ENCODE measurements at regions of chr14 and their contacts with region 1.

Region 1: DNA sequence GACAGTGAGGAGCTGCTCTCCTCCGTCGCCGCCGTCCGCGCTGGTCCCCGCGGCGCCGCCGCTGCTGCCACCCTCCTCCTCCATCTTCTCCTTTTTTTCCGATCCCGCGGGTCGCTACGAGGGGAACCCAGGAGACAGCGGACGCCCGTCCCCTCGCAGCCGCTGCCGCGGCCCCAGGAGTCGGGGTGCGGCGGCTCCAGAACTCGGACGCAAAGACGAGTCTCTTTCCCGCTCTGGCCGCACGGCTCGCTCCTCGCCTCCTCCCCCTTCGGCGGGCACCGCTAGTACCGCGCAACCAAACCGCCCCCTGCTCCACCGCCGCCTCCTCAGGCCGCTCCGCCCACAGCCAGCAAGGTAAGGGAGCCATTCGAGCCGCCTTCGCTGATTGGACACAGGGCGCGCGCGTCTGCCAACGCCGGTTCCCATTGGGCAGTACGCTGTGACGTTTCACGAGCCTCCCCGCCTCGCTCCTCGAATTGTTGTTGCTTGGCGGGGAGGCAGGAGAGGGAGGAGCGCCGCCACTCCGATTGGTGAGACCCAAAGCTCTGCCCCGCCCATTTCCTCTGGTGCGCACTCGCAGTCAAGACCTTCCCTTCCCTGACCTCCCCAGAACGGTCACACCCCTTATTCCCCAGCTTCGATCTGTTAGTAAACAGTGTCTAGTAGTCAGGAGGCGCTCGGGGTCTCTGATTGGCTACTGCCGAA is at the start of gene RPS6KA5:
- DNase-seq: peak; percentile 100
- H3K4me3 Mint-ChIP-seq: peak within 1 kb of the TSS; percentile 84
- H3K27ac Mint-ChIP-seq: peak within 1 kb of the TSS; percentile 40
- H3K4me1 Mint-ChIP-seq: peaks cover 62% of the 10 kb centered on the region
- H3K27me3 Mint-ChIP-seq: no peaks in the 10 kb centered on the region
- total RNA-seq, gene RPS6KA5: 16.6 and 16.7 TPM in 2 replicates

Region 2: DNA sequence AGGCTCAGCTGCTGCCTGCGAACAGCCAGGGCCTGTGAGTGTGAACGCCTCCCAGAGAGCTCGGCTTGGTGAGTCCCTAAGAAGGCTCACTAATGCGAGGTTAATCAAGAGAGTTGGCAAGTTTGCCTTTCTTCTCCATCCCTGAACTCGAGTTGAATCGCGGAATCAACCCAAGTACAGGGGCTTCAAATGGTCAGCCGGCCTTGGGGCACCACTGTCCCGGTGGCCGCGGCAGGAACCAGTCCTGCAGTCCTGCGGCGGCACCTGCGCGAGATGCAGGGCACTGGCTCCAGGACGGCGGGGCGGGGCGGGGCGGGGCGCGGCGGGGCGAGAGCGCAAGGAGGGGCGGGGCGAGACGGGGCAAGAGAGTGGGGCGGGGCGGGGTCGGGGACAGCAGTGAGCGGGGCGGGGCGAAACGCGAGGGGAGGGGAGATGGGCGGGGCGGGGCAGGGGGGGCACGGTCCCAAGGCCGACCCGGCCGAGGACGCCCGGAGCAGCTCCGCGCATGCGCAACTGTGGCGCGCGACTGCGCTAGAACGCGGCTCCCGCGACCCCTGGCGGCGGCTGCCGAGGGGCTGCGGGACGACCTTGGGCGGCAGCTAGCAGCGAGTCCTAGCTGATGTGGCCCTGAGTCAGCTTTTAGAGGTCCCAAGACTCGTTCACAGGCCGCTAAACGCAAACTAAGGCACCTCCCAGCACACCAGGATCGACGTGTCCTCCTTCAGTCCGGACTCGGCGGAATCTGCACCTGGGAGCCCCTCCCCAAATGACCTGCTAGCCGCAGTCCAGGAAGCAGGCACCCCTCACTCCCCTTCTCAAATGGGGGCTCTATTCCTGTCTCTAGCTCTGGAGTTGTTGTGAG is 302.2 kb before region 1 on chr14:
- intact Hi-C with region 1: loop called (anchors 1 kb)
- DNase-seq: peak; percentile 93
- H3K4me3 Mint-ChIP-seq: peak overlapping the region; percentile 74
- H3K27ac Mint-ChIP-seq: peak overlapping the region; percentile 78
- H3K4me1 Mint-ChIP-seq: peaks cover 6% of the 10 kb centered on the region
- H3K27me3 Mint-ChIP-seq: peaks cover 27% of the 10 kb centered on the region

Region 3: DNA sequence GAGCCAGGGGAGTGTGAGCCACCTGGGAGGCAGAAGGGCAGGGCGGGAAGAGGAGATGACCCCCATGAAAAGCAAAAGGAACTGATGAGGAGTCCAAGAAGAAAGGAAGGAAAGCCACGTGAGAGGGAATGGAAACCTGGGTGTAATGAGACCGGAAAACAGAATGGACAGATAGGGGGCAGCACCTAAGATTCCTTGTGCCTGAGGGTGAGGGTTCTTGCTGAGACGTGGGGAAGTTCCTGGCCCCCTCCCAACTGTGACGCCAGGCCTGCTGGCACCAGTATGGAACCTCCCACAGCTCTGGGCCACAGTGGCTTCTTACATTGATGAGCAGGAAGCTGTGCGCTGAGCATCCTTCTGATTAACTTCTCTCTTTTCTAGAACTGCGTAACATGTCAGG is 275.0 kb before region 1 on chr14:
- intact Hi-C with region 1: no loop called
- DNase-seq: no peak
- H3K4me3 Mint-ChIP-seq: no peak overlapping the region
- H3K27ac Mint-ChIP-seq: no peak overlapping the region
- H3K4me1 Mint-ChIP-seq: no peaks in the 10 kb centered on the region
- H3K27me3 Mint-ChIP-seq: no peaks in the 10 kb centered on the region

Region 4: GRCh38 chr14:91021991-91022621 is 38.4 kb before region 1 on chr14:
- intact Hi-C with region 1: loop called (anchors 1 kb)
- DNase-seq: no peak
- H3K4me3 Mint-ChIP-seq: peak overlapping the region; percentile 76
- H3K27ac Mint-ChIP-seq: peak overlapping the region; percentile 94
- H3K4me1 Mint-ChIP-seq: peaks cover 83% of the 10 kb centered on the region
- H3K27me3 Mint-ChIP-seq: no peaks in the 10 kb centered on the region

Region 5: DNA sequence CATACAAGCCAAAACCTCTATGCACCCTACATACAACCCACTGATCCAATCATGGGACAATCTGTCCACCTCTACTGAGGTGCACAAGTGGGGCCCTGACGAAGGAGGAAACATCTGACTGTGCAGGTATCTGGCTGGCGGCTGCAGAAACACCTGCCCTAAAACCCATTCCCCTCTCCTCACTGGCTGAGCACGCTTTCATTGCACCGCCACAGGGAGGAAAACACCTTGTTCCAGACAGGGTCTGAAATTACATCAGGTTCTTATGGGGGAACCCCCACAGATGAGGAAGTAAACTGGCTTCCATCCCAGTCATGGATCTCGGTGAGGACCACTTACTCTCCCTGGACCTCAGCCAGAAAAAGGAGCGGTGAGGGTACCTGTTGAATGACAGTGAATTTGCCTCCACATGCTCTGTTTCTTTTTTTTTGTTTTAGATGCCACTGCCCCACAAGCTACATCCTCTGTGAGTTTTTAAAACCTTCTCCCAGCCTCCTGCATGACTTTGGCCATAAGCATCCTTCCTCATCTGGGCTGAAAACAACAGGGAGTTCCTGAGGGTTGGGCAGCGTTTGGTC is 29.5 kb after region 1 on chr14:
- intact Hi-C with region 1: no loop called
- DNase-seq: no peak
- H3K4me3 Mint-ChIP-seq: no peak overlapping the region
- H3K27ac Mint-ChIP-seq: no peak overlapping the region
- H3K4me1 Mint-ChIP-seq: peaks cover 13% of the 10 kb centered on the region
- H3K27me3 Mint-ChIP-seq: peaks cover 2% of the 10 kb centered on the region

Region 6: GRCh38 chr14:91114079-91115065 is 53.9 kb after region 1 on chr14:
- intact Hi-C with region 1: loop called (anchors 1 kb)
- DNase-seq: peak; percentile 74
- H3K4me3 Mint-ChIP-seq: peak overlapping the region; percentile 95
- H3K27ac Mint-ChIP-seq: peak overlapping the region; percentile 94
- H3K4me1 Mint-ChIP-seq: peaks cover 81% of the 10 kb centered on the region
- H3K27me3 Mint-ChIP-seq: no peaks in the 10 kb centered on the region

Region 7: DNA sequence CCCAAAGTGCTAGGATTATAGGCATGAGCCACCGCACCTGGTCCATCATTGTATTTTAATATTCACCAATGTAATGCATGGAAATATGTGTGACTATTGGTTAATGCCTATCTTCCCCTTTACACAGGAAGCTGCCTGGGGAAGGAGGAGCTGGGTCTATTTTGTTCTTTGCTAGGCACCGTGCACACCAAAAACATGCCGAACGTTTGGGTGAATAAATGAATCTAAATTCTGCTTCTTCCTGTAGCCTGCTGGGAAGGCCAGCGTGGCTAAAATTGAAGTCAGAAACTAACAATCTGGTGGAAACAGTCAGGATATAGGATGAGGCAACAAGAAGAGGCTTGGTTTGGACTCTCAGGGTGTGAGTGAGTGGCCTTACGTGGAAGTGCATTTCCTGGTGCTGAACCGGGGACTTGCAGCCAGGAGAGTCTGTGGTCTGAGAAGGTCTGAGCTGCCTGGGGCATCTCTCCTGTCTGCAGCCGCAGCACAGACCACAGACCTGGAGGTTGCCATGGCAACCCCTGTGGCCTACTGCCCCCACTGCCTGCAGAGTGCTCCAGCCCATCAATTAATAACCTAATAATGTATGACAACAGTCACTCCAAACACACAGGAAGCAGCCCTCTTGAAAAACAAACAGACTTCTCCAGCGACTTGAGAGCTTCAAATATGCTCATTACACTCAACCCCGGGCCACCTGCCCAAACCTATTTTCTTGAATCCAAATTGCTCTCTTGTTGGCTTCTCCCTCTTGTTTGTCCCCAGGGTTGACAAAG is 189.5 kb after region 1 on chr14:
- intact Hi-C with region 1: loop called (anchors 5 kb)
- DNase-seq: peak; percentile 61
- H3K4me3 Mint-ChIP-seq: peak overlapping the region; percentile 70
- H3K27ac Mint-ChIP-seq: peak overlapping the region; percentile 93
- H3K4me1 Mint-ChIP-seq: peaks cover 80% of the 10 kb centered on the region
- H3K27me3 Mint-ChIP-seq: no peaks in the 10 kb centered on the region

Region 8: DNA sequence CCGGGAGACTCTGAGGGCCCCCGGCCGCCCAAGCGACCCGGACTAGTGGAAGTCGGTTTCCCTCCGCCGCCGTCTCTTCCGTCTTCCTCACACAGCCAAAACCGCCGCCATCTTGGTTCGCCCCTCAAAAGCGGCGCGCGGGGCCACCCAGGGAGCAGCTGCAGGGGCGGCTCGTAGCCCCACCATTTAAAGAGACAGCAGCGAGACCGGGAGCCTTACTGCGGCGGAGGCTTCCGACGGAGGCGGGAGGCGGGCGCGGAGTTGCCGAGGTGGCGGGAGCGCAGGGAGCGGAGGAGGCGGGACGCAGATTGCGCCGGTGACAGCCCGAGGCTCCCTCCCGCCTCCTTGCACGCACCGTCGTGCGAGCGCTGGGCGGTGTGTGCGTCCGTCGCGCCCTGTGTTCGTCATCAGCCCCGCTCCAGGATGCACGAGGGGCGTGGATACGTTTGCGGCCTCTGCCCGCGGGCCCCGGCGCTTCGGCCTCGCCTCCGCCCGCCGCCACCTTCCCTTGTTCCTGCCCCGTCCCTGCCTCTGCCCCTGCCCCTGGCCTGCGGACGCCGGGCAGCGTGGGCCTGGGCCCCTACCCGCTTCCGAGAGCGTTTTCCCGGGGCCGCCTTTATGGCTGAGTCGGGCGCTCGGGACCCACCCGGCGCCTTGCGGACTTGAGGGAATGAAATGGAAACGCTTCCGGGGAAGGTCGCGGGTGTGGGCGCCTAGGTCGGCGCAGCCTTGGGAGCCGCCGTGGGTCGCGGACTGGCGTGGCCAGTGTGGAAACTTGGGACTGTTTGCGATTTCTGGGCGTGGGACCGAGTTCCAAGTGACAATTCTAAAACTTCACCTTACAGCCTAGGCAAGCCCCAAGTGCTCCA is 449.9 kb after region 1 on chr14 and contains the start of gene PPP4R3A:
- intact Hi-C with region 1: loop called (anchors 2 kb)
- DNase-seq: peak; percentile 91
- H3K4me3 Mint-ChIP-seq: peak within 1 kb of the TSS; percentile 98
- H3K27ac Mint-ChIP-seq: peak within 1 kb of the TSS; percentile 100
- H3K4me1 Mint-ChIP-seq: peaks cover 29% of the 10 kb centered on the region
- H3K27me3 Mint-ChIP-seq: peaks cover 5% of the 10 kb centered on the region
- total RNA-seq, gene PPP4R3A: 130 and 144 TPM in 2 replicates

Measured in activated T-helper 1 cell treated with anti-CD3 and anti-CD28 coated beads, Interleukin-12 subunit alpha, Interleukin-12 subunit beta, Interleukin-2, Interleukin-4 antibody, amounts not matched to agents 30 ng/mL and 10 ng/mL and 1 ng/mL, durations not matched to agents 14 hours and 24 hours and 36 hours (primary cell).